Dendritic cell treated with granulocyte-macrophage colony-stimulating factor and Interleukin-4, amounts not matched to agents 40 ng/mL and 50 ng/mL, for 4 days (primary cell): ENCODE measurements at regions of chr2 and their contacts with region 1.

Region 1: GRCh38 chr2:38076606-38077430 is 867 bp upstream of the CYP1B1 start:
- H3K4me3 Mint-ChIP-seq: peak overlapping the region; percentile 93
- H3K27ac Mint-ChIP-seq: peak overlapping the region; percentile 96
- H3K4me1 Mint-ChIP-seq: peaks cover 67% of the 10 kb centered on the region
- H3K27me3 Mint-ChIP-seq: no peaks in the 10 kb centered on the region

Region 2: DNA sequence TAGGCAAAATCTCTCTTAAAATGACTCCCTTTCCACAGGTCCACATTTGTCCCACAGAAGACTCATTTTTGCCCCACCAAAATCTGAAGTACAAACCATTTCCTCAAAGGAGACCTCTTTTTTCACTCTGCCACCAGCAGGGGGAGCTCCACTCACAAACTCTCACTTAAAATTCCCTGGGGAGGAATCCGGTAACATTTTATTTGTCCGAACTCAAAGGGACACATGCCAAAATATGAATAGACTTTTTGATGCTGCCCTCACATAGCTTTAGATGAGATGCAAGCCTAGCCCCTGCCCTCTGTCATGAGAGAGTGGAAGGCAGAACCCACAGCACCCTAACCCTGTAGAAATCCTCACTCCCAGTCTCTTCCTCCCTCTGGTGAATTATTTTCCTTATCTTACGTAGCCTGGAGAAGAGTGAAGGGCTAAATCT is 94.7 kb before region 1 on chr2:
- intact Hi-C with region 1: loop called (anchors 10 kb)
- H3K4me3 Mint-ChIP-seq: no peak overlapping the region
- H3K27ac Mint-ChIP-seq: no peak overlapping the region
- H3K4me1 Mint-ChIP-seq: peaks cover 21% of the 10 kb centered on the region
- H3K27me3 Mint-ChIP-seq: no peaks in the 10 kb centered on the region

Region 3: GRCh38 chr2:38095996-38096861 is 19.4 kb after region 1 on chr2:
- intact Hi-C with region 1: loop called (anchors 2 kb)
- H3K4me3 Mint-ChIP-seq: no peak overlapping the region
- H3K27ac Mint-ChIP-seq: peak overlapping the region; percentile 73
- H3K4me1 Mint-ChIP-seq: peaks cover 79% of the 10 kb centered on the region
- H3K27me3 Mint-ChIP-seq: peaks cover 12% of the 10 kb centered on the region

Region 4: DNA sequence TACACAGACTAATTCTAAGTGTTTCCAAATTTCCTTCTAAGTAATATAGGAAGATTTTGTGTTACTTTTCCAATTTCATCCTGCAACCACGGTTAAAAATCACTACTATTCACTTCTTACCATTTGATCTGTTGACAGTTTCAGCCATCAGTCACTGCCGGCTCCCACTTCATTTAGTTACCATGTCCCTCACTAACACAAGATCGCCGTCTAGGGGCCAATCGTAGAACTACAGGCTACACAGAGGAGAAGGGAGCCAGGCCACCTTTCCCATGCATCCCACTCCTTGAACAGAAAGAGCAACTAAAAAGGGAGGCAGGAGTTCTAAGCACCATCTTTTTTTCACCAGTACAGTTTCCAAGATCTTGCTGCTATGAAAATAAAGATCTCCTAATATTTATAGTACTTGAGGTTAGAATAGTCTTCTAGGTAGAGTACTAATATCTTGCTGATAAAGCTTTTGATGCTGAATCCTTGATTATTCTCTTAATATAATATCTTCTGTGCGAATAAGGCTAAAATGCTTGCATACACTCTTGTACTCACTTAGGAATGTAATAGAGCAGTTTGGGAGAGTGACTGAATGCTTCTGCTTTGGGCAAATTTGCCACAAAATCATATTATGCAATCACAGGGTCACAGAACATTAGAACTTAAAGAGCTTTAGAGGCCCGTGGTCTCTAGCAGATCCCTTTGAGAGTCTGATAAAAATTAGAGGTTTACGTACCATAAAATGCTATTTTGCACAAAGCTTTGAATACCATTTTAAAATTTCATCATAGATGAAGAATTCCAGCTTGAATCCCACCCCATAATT is 38.6 kb after region 1 on chr2:
- intact Hi-C with region 1: loop called (anchors 2 kb)
- H3K4me3 Mint-ChIP-seq: no peak overlapping the region
- H3K27ac Mint-ChIP-seq: peak overlapping the region; percentile 81
- H3K4me1 Mint-ChIP-seq: peaks cover 81% of the 10 kb centered on the region
- H3K27me3 Mint-ChIP-seq: no peaks in the 10 kb centered on the region

Region 5: GRCh38 chr2:38128653-38129052 is 51.8 kb after region 1 on chr2:
- intact Hi-C with region 1: loop called (anchors 1 kb)
- H3K4me3 Mint-ChIP-seq: no peak overlapping the region
- H3K27ac Mint-ChIP-seq: peak overlapping the region; percentile 89
- H3K4me1 Mint-ChIP-seq: peaks cover 70% of the 10 kb centered on the region
- H3K27me3 Mint-ChIP-seq: no peaks in the 10 kb centered on the region

Region 6: DNA sequence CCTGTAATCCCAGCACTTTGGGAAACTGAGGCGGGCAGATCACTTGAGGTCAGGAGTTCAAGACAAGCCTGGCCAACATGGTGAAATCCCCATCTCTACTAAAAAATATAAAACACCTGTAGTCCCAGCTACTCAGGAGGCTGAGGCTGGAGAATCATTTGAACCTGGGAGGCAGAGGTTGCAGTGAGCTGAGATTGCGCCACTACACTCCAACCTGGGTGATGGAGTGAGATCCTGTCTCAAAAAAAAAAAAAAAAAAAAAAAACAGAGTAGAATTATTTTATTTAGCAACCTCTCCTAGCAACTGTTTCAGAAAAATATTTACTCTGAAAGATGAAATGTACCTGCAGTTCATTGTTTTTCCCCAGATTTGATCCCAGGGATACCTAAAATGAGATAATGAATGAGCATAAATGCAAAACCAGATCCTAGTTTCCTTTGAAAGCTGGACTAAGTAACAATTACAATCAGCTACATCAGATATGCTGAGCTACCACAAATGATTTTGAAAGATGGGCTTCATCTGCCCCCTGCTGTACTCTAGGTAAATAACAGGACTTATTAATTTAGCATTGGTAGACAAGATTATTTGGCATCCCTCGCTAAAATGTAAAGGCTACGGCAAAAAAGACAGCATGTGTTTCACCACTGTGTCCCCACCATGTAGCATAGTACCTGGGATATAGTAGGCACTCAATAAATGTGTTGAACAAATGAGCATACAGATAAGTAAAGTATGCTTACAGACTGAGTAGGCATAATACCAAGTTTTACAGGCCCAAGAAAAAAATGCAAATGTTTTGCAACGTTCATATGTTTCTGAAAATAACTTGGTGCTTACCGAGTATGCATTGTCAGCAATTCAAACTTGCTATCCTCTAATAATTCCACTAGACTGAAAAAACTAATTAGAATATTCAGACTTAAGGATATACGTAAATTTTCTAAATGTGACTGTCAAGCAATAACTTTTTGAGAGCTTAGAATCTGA is 197.8 kb after region 1 on chr2:
- intact Hi-C with region 1: loop called (anchors 10 kb)
- H3K4me3 Mint-ChIP-seq: no peak overlapping the region
- H3K27ac Mint-ChIP-seq: no peak overlapping the region
- H3K4me1 Mint-ChIP-seq: peaks cover 5% of the 10 kb centered on the region
- H3K27me3 Mint-ChIP-seq: no peaks in the 10 kb centered on the region

Region 7: DNA sequence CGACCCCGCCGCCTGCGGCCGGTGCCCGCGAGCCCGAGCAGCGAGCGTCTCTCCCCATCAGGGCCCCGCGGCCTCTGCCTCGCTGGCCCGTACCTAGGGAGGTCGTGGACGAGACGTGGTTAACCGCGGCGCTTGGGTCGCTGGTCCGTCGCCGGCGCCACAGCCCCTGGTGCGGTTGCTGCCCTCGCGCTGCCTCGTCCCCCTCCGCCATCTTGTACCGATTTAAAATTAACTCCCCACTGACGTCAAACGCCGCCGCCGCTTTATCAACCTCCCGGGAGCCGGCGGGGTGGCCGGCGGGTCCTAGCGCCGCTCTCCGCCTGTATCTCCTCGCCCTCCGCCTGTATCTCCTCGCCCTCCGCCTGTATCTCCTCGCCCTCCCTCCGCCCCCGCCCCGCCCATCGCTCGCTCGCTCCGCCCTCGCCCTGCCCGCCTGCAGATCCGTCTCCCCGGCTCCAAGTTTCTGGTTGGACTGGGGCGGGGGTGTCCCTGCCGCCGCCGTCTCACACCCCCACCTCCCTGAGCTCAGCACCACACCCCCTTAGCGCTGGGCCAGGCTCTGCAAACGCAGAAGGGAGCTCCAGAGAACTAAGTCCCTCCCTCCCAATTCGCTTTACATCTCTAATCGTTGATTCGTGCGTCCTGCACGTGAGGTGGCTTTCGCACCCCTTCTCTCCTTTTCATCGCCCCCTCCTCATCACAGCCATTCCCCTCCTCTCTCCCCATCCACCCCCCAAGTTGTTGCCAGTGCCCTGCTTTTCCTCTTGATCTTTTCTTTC is 300.4 kb after region 1 on chr2 and contains the start of gene ATL2:
- intact Hi-C with region 1: loop called (anchors 5 kb)
- H3K4me3 Mint-ChIP-seq: peak within 1 kb of the TSS; percentile 91
- H3K27ac Mint-ChIP-seq: peak within 1 kb of the TSS; percentile 93
- H3K4me1 Mint-ChIP-seq: peaks cover 47% of the 10 kb centered on the region
- H3K27me3 Mint-ChIP-seq: no peaks in the 10 kb centered on the region